Activated CD4-positive, alpha-beta T cell treated with anti-CD3 and anti-CD28 coated beads for 36 hours (primary cell): ENCODE measurements at regions of chr17 and their contacts with region 1.

Region 1: DNA sequence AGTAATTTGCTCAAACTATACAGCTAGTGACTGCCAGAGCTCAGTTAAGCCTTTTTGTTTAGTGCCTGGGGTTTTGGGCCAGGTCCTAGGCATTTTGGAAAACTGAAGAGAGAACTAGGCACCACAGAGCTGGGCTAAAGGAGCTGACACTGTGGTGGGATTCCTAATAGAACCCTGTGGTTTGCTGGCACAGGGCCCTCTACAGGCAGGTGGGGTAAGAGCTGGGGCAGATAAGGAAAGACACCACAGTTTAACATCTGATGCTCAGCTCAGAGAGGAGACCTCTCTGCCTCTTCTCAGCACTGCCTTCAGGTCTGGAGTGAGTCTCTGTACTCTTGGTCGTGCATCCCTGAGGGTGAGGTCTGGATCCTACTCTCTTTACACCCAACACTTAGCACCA is 121.2 kb downstream of the SNX11 start:
- DNase-seq: no peak
- ATAC-seq: no peak
- H3K4me3 Mint-ChIP-seq: no peak overlapping the region
- H3K27ac Mint-ChIP-seq: no peak overlapping the region
- H3K4me1 Mint-ChIP-seq: peaks cover 23% of the 10 kb centered on the region
- H3K27me3 Mint-ChIP-seq: no peaks in the 10 kb centered on the region

Region 2: GRCh38 chr17:48215583-48216139 is 13.1 kb before region 1 on chr17:
- CTCF ChIA-PET with region 1: interaction called, 22 read pairs
- POLR2A ChIA-PET with region 1: no interaction called
- intact Hi-C with region 1: no loop called
- DNase-seq: peak; percentile 5
- ATAC-seq: no peak
- H3K4me3 Mint-ChIP-seq: no peak overlapping the region
- H3K27ac Mint-ChIP-seq: no peak overlapping the region
- H3K4me1 Mint-ChIP-seq: peaks cover 2% of the 10 kb centered on the region
- H3K27me3 Mint-ChIP-seq: no peaks in the 10 kb centered on the region